Pancreas (tissue), 10 donors: ENCODE measurements at regions of chr6 and their contacts with region 1.

Region 1: GRCh38 chr6:52760105-52760765 is 3.0 kb downstream of the GSTA2 start:
- DNase-seq: no peak
- ATAC-seq: peak; percentile 32 to 55 (median 44)
- H3K4me3 ChIP-seq: peak overlapping the region in 1 of 4 donors; percentile 12
- H3K27ac ChIP-seq: peak overlapping the region in 2 of 4 donors; percentile 42 to 61
- H3K4me1 ChIP-seq: peaks cover 0 to 27% (median 20%) of the 10 kb centered on the region in 3 donors
- H3K27me3 ChIP-seq: no peaks in the 10 kb centered on the region
- CTCF ChIP-seq: no peak

Region 2: GRCh38 chr6:52243282-52243893 is 516.8 kb before region 1 on chr6:
- intact Hi-C with region 1: no loop called
- DNase-seq: no peak
- ATAC-seq: peak in 2 of 4 donors; percentile 42 to 81
- H3K4me3 ChIP-seq: no peak overlapping the region
- H3K27ac ChIP-seq: no peak overlapping the region
- H3K4me1 ChIP-seq: no peaks in the 10 kb centered on the region
- H3K27me3 ChIP-seq: no peaks in the 10 kb centered on the region
- CTCF ChIP-seq: no peak

Region 3: GRCh38 chr6:52724406-52725121 is 35.7 kb before region 1 on chr6:
- intact Hi-C with region 1: loop called in 1 of 3 experiments (anchors 5 kb)
- DNase-seq: peak; percentile 85 to 93 (median 91)
- ATAC-seq: peak; percentile 84 to 92 (median 85)
- H3K4me3 ChIP-seq: no peak overlapping the region
- H3K27ac ChIP-seq: peak overlapping the region; percentile 47 to 79 (median 66)
- H3K4me1 ChIP-seq: peaks cover 38 to 55% (median 50%) of the 10 kb centered on the region in 3 donors
- H3K27me3 ChIP-seq: no peaks in the 10 kb centered on the region
- CTCF ChIP-seq: peak; percentile 26 to 67 (median 43)